Activated CD4-positive, alpha-beta memory T cell treated with anti-CD3 and anti-CD28 coated beads for 36 hours (primary cell): ENCODE measurements at regions of chr2 and their contacts with region 1.

Region 1: DNA sequence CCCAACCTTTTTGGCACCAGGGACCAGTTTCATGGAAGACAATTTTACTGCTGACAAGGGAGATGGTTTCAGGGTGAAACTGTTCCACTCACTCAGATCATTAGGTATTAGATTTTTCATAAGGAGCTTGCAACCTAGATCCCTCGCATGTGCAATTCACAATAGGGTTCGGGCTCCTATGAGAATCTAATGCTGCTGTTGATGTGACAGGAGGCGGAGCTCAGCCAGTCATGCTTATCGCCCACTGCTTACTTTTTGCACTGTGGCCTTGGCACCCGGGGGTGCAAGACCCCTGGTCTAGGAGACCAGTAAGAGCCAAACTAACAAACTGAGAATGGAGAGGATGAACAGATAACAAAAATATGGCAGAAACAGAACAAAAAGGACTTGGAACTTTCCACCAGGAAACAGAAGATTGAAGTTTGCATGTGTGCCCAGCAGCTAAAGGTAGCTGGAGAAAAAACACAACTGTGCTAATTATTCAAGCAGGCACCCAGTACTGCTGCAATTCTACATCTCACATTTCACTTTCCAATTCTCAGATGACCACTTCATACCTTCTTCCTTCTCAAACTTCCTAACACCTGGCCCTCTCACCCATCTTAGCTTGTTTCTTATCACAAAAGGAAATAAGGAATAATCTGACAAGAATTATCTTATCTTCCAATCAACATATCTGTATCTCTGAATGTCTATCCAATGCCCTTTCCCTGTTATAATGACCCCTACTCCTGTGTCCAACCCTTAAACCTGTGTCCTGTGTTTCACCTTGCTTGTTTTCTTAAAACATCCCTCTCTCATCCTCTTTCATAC is 24.8 kb downstream of the SP3 start:
- DNase-seq: no peak
- H3K4me3 Mint-ChIP-seq: no peak overlapping the region
- H3K27ac Mint-ChIP-seq: peak overlapping the region; percentile 24
- H3K4me1 Mint-ChIP-seq: peaks cover 70% of the 10 kb centered on the region
- H3K27me3 Mint-ChIP-seq: no peaks in the 10 kb centered on the region

Region 2: DNA sequence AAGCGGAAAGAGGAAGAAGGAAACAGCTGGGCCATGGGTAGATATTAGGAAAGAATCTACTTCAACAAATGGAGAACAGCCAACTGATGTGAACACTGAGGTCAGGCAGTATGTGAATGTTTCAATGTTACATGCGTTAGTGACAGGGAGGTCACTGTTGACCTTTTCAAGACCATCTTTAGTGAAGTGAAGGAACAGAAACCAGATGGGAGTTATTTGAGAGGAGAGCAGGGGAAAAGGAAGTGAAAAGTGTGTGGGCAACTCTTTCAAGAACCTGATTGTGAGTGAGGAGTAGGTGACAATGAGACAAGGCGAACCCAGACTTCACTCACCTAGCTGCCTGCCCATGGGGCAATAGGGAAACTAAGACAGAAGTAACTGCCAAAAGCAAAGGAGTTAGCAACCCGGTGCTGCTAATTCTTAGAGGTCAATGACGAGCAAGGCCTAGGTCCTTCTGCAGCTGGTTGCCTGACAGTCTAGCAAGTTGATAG is 42.2 kb before region 1 on chr2:
- CTCF ChIA-PET with region 1: no interaction called
- POLR2A ChIA-PET with region 1: no interaction called
- intact Hi-C with region 1: loop called (anchors 5 kb)
- DNase-seq: no peak
- H3K4me3 Mint-ChIP-seq: no peak overlapping the region
- H3K27ac Mint-ChIP-seq: peak overlapping the region; percentile 10
- H3K4me1 Mint-ChIP-seq: peaks cover 23% of the 10 kb centered on the region
- H3K27me3 Mint-ChIP-seq: no peaks in the 10 kb centered on the region

Region 3: DNA sequence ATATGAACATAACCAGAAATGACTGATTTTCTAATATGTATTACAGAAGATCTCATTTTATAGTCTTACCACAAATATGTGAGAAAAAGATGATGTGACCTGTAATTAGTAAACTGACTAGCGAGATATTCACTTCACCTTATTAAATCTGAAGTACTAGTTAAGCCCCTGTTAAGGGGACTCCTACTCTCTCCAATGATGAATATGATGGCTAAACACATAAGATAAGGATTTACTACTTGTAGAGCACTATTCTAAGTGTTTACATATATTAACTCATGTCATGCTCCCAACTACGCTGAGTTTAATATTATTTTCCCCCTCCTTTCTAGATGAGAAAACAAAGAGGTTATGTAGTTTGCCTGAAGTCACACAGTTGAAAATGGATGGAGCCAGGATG is 16.1 kb before region 1 on chr2:
- CTCF ChIA-PET with region 1: interaction called, 3 read pairs
- POLR2A ChIA-PET with region 1: no interaction called
- intact Hi-C with region 1: loop called (anchors 2 kb)
- DNase-seq: no peak
- H3K4me3 Mint-ChIP-seq: no peak overlapping the region
- H3K27ac Mint-ChIP-seq: no peak overlapping the region
- H3K4me1 Mint-ChIP-seq: peaks cover 67% of the 10 kb centered on the region
- H3K27me3 Mint-ChIP-seq: no peaks in the 10 kb centered on the region

Region 4: GRCh38 chr2:174023591-174024523 is 83.4 kb after region 1 on chr2:
- CTCF ChIA-PET with region 1: interaction called, 3 read pairs
- POLR2A ChIA-PET with region 1: interaction called, 3 read pairs
- intact Hi-C with region 1: loop called (anchors 1 kb)
- DNase-seq: peak; percentile 69
- H3K4me3 Mint-ChIP-seq: no peak overlapping the region
- H3K27ac Mint-ChIP-seq: peak overlapping the region; percentile 5
- H3K4me1 Mint-ChIP-seq: peaks cover 8% of the 10 kb centered on the region
- H3K27me3 Mint-ChIP-seq: peaks cover 5% of the 10 kb centered on the region

Region 5: DNA sequence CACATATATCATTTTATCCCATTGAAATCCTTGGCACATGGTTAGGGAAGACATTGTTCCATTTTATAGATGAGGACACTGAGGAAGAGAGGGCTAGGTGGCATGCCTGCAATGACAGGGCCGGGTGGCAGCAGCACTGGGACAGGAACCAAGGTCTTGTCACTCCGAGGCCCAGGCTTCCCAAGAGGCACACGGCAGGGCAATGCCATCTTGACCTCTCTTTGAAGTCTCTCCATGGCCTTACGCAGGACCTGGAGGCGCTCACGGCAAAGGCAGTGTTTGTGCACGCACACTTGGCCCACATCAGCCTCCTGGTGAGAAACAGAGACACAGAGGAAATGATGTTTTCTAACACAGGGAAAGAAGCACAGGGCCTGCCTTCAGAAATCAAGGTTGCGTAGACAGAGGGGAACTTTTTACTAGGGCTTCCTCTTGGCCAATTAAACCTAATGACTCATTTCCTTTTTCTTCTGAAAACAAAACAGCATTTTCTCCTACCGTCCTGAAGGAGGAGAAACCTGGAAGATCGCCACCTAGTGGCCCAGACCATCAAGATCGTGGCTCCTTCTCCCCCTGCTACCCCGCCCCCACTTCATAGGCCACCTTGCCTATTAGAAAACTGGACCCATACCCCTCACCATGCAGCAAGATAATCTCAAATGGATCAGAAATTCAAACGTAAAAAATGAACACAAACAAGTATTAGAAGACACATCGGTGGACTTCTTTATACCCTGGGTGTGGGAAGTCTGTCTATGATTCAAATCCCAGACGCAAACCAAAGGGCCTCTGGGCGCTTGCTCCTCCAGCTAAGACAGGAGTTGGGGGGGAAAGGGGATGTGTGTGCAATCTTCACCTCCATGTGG is 99.4 kb after region 1 on chr2:
- CTCF ChIA-PET with region 1: interaction called, 3 read pairs
- POLR2A ChIA-PET with region 1: no interaction called
- intact Hi-C with region 1: loop called (anchors 5 kb)
- DNase-seq: peak; percentile 90
- H3K4me3 Mint-ChIP-seq: peak overlapping the region; percentile 43
- H3K27ac Mint-ChIP-seq: peak overlapping the region; percentile 86
- H3K4me1 Mint-ChIP-seq: peaks cover 17% of the 10 kb centered on the region
- H3K27me3 Mint-ChIP-seq: peaks cover 7% of the 10 kb centered on the region

Region 6: DNA sequence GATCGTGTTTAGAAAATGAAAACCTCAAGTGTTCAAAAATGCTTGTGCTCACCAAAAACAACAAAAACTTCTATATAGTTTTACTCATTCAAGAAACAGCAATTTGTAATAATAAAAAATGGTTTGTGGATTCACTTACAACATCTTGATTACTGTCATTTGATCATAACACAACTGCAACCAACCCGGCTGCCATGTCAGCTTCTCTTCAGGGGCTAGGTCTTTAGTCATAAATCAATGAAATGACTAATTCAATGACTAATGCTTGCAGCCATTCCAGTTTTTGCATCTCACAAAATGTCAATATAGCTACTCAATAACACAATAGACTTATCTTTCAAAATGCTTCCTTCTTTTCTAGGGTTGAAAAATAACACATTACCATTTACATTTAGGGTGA is 179.9 kb after region 1 on chr2:
- CTCF ChIA-PET with region 1: no interaction called
- POLR2A ChIA-PET with region 1: no interaction called
- intact Hi-C with region 1: loop called (anchors 1 kb)
- DNase-seq: peak; percentile 68
- H3K4me3 Mint-ChIP-seq: no peak overlapping the region
- H3K27ac Mint-ChIP-seq: no peak overlapping the region
- H3K4me1 Mint-ChIP-seq: peaks cover 8% of the 10 kb centered on the region
- H3K27me3 Mint-ChIP-seq: no peaks in the 10 kb centered on the region